ENCODE measurements at regions of chr16 and their contacts with region 1.

Region 1: GRCh38 chr16:58563235-58563634 is 47.9 kb downstream of the SETD6 start:
- DNase-seq: no peak

Region 2: GRCh38 chr16:57358527-57359095 is 1204.6 kb before region 1 on chr16 and contains the start of gene CCL22:
- intact Hi-C with region 1: no loop called
- DNase-seq: peak; percentile 29
- total RNA-seq, gene CCL22: 0.19 to 0.46 TPM

Region 3: GRCh38 chr16:57564571-57565270 is 998.5 kb before region 1 on chr16:
- intact Hi-C with region 1: loop called in 1 of 2 experiments (anchors 5 kb)
- DNase-seq: no peak

Region 4: DNA sequence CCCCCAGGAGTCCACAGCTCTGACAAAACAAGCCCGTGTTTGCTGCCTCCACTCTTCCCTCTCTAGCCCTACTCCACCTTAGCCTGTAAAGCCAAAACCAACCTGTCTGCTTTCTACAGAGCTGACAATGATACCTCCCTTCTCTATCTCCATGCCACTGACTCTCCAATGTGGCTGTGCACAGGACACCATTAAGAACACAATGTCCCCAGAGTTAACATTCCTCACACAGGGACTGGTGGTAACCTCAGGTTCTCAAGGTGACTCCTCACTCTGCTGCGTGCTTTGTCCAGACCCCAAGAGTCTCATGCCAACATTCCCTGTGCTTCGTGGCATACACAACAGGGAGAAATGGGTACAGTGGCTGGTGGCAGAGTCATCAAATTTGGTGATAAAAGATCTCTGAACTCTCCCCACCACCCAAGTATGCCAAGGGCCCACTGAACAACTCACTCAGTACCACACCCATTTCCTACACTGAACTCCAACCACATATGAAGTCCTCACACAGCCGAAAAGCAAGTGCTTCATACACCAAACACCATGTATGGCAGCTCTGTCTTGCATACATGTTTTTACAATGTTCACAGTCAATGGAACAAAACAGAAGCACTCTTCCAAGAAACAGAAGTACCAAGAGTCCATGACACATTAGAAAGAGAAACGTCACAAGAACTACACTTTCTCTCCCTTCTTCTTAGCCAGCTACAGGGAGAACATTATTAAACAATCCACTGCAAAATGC is 386.5 kb before region 1 on chr16:
- intact Hi-C with region 1: loop called in 1 of 2 experiments (anchors 2 kb)
- DNase-seq: no peak

Region 5: DNA sequence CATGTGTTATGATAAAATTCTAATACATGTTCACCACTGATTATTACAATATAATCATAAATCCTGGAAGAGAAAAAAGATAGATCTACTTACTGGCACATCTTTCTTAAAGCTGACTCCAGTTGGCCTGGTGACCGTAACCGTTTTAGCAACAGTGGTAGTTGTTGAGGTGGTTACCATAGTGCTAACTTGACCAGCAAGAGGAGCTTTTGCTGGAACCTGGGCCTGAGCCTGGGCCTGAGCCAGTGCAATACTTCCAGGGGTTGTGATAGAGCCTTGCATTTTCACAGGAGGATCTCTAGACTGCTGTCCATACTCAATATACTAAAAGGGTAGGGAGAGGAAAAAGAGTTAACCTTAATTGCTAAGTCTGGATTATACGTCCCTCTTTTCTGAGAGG is 11.7 kb before region 1 on chr16:
- intact Hi-C with region 1: no loop called
- DNase-seq: no peak

Region 6: GRCh38 chr16:58614212-58614611 is 51.0 kb after region 1 on chr16:
- intact Hi-C with region 1: no loop called
- DNase-seq: no peak

Region 7: DNA sequence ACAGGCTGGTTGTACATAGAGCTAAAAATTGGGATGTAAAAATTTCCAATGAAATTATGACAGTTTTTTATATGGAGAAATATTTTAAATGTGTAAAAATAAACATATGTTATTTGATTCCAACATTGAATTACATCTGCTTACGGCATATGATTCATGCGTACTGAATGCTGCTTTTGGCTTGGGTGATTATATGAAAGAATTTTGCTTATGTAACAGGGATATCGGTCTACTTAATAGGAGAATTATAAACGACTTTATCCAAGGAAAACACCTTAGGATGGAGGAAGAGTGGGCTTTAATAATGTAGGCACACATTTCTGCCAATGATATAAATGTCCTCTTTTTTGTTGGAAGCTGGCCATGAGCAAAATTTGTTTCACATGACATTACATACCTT is 368.2 kb after region 1 on chr16:
- intact Hi-C with region 1: no loop called
- DNase-seq: no peak

Measured in posterior vena cava (tissue), 2 donors.